ENCODE measurements at regions of chr2 and their contacts with region 1.

Region 1: GRCh38 chr2:190511104-190511503 is 23.4 kb downstream of the NEMP2 start:
- DNase-seq: peak; percentile 39
- H3K4me3 Mint-ChIP-seq: no peak overlapping the region
- H3K27ac Mint-ChIP-seq: no peak overlapping the region
- H3K4me1 Mint-ChIP-seq: peaks cover 6% of the 10 kb centered on the region
- H3K27me3 Mint-ChIP-seq: no peaks in the 10 kb centered on the region
- CTCF ChIP-seq: peak; percentile 27

Region 2: DNA sequence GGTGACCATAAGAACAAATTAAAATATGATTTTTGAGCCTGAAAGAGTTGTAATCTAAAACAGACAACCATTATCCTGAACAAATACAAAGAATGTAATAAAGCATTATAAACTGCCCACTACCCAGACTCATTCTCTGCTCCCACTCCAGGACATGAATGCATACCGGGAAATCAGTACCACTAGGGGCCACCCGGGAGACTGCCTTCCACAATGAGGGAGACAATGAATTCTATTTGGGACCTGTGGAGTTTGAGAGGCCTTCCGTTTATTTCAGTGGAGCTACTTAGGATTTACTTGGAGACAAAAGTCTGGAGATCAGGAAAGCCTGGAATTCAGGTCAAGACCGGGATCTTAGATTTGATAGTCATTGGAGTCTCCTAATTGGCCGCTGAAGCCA is 187.8 kb after region 1 on chr2:
- CTCF ChIA-PET with region 1: no interaction called
- POLR2A ChIA-PET with region 1: no interaction called
- intact Hi-C with region 1: no loop called
- DNase-seq: no peak
- H3K4me3 Mint-ChIP-seq: no peak overlapping the region
- H3K27ac Mint-ChIP-seq: no peak overlapping the region
- H3K4me1 Mint-ChIP-seq: no peaks in the 10 kb centered on the region
- H3K27me3 Mint-ChIP-seq: no peaks in the 10 kb centered on the region
- CTCF ChIP-seq: no peak

Region 3: DNA sequence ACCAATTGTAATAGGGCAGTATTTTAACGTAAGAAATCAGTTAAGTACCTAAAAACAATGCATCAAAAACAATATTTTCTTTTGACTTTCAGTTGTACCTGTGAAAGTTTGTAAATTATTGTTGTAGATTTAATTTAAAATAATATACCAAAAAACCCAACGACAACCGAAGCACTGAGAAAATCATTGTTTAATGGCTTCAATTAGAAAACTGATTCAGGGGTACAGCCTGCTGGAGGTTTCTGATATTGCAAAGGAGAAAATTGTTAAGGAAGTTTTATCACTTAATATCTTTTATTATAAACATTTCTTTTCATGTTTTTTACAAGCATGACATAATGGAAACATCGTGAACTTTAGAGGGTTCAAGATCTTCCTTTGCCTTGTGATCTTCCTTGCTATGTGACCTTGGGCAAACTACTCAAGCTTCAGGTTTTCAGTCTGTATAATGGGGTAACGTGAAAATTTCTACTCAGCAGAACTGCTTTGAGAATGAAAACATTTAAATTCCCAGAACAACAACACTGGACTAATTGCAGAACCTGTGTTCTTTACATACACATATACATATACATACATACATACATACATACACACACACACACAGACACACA is 293.2 kb after region 1 on chr2:
- CTCF ChIA-PET with region 1: no interaction called
- POLR2A ChIA-PET with region 1: no interaction called
- intact Hi-C with region 1: loop called (anchors 5 kb)
- DNase-seq: peak; percentile 34
- H3K4me3 Mint-ChIP-seq: no peak overlapping the region
- H3K27ac Mint-ChIP-seq: no peak overlapping the region
- H3K4me1 Mint-ChIP-seq: no peaks in the 10 kb centered on the region
- H3K27me3 Mint-ChIP-seq: no peaks in the 10 kb centered on the region
- CTCF ChIP-seq: peak; percentile 62

Measured in MCF 10A (cell line).